CD4-positive, alpha-beta memory T cell (primary cell): ENCODE measurements at regions of chr7 and their contacts with region 1.

Region 1: GRCh38 chr7:74026903-74027551 is 946 bp upstream of the ELN start:
- DNase-seq: peak in 4 of 5 donors; percentile 33 to 58 (median 36)
- H3K4me3 ChIP-seq: no peak overlapping the region
- H3K4me3 Mint-ChIP-seq: peak overlapping the region in 2 of 8 donors; percentile 34 to 61
- H3K27ac ChIP-seq: no peak overlapping the region
- H3K27ac Mint-ChIP-seq: no peak overlapping the region
- H3K4me1 ChIP-seq: peaks cover 4% of the 10 kb centered on the region
- H3K4me1 Mint-ChIP-seq: peaks cover 3 to 30% (median 15%) of the 10 kb centered on the region in 4 donors
- H3K27me3 ChIP-seq: peaks cover 16% of the 10 kb centered on the region
- H3K27me3 Mint-ChIP-seq: peaks cover 42 to 46% of the 10 kb centered on the region in 2 donors

Region 2: DNA sequence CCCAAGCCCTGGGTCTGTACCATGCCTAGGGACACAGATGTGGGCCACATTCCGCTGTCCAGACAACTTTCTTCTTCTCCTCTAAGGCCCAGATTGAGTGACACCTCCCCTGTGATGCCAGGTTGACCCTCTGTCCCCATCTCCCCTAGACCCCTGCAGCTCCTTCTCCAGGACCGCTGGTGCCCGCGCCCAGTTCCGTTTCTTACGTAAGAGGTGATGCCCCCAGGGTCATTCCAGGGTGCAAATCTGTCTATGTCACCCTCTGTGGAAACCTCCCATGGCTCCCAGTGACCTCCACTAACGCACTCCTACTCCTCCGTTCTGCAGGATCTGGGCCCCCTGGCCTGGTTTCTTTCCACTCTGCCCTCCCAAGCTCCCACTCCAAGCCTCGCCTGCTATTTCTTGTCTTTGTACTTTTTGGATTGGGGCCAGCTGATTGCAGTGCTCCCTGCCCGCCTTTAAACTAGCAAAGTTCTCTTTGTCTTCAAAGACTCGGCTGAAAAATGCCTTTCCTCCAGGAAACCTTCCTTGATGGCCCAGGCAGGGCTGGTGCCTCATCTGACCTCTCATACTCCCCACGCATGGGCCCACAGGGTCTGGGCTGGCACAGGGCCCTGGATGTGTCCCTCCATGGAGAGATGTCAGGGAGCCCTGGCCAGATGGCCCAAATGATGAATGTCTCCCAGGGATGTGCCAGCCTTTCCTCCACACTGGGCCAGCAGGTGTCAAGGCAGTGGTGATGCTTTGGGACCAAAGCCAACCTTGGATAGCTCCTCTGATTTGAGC is 20.4 kb before region 1 on chr7:
- CTCF ChIA-PET with region 1: interaction called, 10 read pairs
- POLR2A ChIA-PET with region 1: no interaction called
- intact Hi-C with region 1: no loop called
- DNase-seq: no peak
- H3K4me3 ChIP-seq: no peak overlapping the region
- H3K4me3 Mint-ChIP-seq: no peak overlapping the region
- H3K27ac ChIP-seq: no peak overlapping the region
- H3K27ac Mint-ChIP-seq: no peak overlapping the region
- H3K4me1 ChIP-seq: no peaks in the 10 kb centered on the region
- H3K4me1 Mint-ChIP-seq: peaks cover 3 to 15% (median 9%) of the 10 kb centered on the region in 4 donors
- H3K27me3 ChIP-seq: no peaks in the 10 kb centered on the region
- H3K27me3 Mint-ChIP-seq: peaks cover 2 to 5% of the 10 kb centered on the region in 2 donors

Region 3: DNA sequence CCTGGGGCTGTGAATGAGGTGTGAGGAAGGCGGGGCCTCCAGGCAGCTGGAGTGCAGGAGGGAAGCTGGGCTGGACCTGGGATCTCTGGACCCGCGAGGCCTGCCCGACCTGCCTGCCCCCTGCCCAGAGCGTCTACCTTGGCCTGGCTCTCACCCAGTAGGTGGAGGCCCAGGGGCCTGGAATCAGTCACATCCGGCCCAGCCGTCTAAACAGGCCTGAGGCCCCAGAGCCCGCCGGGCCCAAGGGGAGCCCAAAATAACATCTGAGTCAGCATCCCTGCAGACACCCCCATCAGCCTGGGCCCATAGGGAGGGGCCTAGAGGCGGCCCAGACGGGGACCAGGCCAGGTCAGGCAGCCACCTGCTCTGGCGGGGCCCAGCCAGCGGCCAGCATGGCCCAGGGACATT is 14.2 kb before region 1 on chr7:
- CTCF ChIA-PET with region 1: interaction called, 46 read pairs
- POLR2A ChIA-PET with region 1: no interaction called
- intact Hi-C with region 1: no loop called
- DNase-seq: no peak
- H3K4me3 ChIP-seq: no peak overlapping the region
- H3K4me3 Mint-ChIP-seq: no peak overlapping the region
- H3K27ac ChIP-seq: no peak overlapping the region
- H3K27ac Mint-ChIP-seq: no peak overlapping the region
- H3K4me1 ChIP-seq: no peaks in the 10 kb centered on the region
- H3K4me1 Mint-ChIP-seq: no peaks in the 10 kb centered on the region
- H3K27me3 ChIP-seq: no peaks in the 10 kb centered on the region
- H3K27me3 Mint-ChIP-seq: peaks cover 0 to 5% of the 10 kb centered on the region in 2 donors

Region 4: DNA sequence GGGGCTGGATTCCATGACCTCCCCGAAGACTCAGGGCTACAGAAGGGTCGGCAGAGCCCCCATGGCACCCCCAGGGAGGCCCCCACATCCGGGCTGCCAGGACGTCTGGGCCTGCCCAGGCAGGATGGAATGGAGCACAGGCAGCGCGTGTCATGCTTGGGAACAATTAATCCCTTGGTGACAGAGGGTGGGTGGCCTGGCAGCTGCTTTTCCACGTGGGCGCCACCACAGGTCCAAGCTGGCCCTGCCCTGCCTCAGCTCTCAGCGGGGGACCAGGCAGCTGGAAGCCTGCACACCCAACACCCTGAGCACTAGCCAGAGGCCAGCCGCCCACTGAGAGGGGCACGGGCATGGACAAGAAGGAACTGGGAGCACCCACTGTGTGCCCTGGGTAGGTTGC is 12.3 kb after region 1 on chr7:
- CTCF ChIA-PET with region 1: interaction called, 16 read pairs
- POLR2A ChIA-PET with region 1: no interaction called
- intact Hi-C with region 1: no loop called
- DNase-seq: no peak
- H3K4me3 ChIP-seq: no peak overlapping the region
- H3K4me3 Mint-ChIP-seq: no peak overlapping the region
- H3K27ac ChIP-seq: no peak overlapping the region
- H3K27ac Mint-ChIP-seq: no peak overlapping the region
- H3K4me1 ChIP-seq: no peaks in the 10 kb centered on the region
- H3K4me1 Mint-ChIP-seq: no peaks in the 10 kb centered on the region
- H3K27me3 ChIP-seq: no peaks in the 10 kb centered on the region
- H3K27me3 Mint-ChIP-seq: peaks cover 0 to 2% of the 10 kb centered on the region in 2 donors